BJ (cell line): ENCODE measurements at regions of chr14 and their contacts with region 1.

Region 1: GRCh38 chr14:20970983-20971704 is 15.9 kb downstream of the RNASE2 start:
- DNase-seq: no peak
- H3K4me3 ChIP-seq: peak overlapping the region; percentile 44
- H3K27me3 ChIP-seq: peaks cover 2% of the 10 kb centered on the region; the same call in 1 of the 2 replicates
- CTCF ChIP-seq: peak; percentile 100

Region 2: GRCh38 chr14:20454516-20455354 is 516.4 kb before region 1 on chr14 and contains the starts of genes APEX1 and OSGEP:
- CTCF ChIA-PET with region 1: no interaction called
- POLR2A ChIA-PET with region 1: interaction called, 12 read pairs
- DNase-seq: peak; percentile 93
- H3K4me3 ChIP-seq: peak within 1 kb of the TSS; percentile 65
- H3K27me3 ChIP-seq: no peaks in the 10 kb centered on the region
- CTCF ChIP-seq: no peak
- polyA plus RNA-seq, gene APEX1: 219 and 237 TPM in 2 replicates
- polyA plus RNA-seq, gene OSGEP: 21.2 and 28.9 TPM in 2 replicates

Region 3: GRCh38 chr14:20698934-20699333 is 272.2 kb before region 1 on chr14:
- CTCF ChIA-PET with region 1: no interaction called
- POLR2A ChIA-PET with region 1: no interaction called
- DNase-seq: no peak
- H3K4me3 ChIP-seq: no peak overlapping the region
- H3K27me3 ChIP-seq: no peaks in the 10 kb centered on the region
- CTCF ChIP-seq: no peak

Region 4: DNA sequence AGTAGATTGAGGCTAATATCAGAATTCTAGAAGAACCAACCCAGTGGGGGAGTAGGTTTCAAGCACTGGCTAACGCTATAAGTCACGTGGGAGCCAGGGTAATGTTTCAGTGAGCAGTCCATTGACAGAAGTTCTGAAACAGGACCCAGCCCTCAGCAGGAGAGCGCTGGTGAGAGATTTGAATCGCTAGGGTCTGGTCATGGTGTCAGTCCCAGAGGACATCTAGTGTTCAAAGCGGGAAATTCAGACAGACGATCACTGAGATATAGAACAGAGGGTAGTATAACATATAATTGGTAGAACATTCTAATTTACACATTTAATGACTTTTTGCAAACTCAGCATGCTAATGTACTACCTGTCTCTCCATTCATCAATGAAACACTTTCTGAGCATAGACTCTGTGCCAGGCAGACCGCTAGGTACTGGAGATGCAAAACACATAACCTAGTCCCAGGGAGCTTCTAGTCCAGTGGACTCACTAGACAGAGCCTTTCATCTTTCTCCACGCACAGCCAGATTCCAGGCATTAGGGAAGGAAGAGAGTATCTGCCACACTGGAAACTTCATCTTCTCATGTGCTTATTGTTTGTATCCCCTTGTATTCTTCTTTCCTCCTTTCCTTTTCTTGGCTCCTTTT is 115.4 kb before region 1 on chr14:
- CTCF ChIA-PET with region 1: interaction called, 53 read pairs
- POLR2A ChIA-PET with region 1: no interaction called
- DNase-seq: no peak
- H3K4me3 ChIP-seq: no peak overlapping the region
- H3K27me3 ChIP-seq: peaks cover 6% of the 10 kb centered on the region; the same call in 1 of the 2 replicates
- CTCF ChIP-seq: peak; percentile 63

Region 5: GRCh38 chr14:20956376-20956976 is 14.7 kb before region 1 on chr14:
- CTCF ChIA-PET with region 1: interaction called, 38 read pairs
- POLR2A ChIA-PET with region 1: interaction called, 4 read pairs
- DNase-seq: no peak
- H3K4me3 ChIP-seq: no peak overlapping the region
- H3K27me3 ChIP-seq: peaks cover 3% of the 10 kb centered on the region; the same call in 1 of the 2 replicates
- CTCF ChIP-seq: no peak

Region 6: DNA sequence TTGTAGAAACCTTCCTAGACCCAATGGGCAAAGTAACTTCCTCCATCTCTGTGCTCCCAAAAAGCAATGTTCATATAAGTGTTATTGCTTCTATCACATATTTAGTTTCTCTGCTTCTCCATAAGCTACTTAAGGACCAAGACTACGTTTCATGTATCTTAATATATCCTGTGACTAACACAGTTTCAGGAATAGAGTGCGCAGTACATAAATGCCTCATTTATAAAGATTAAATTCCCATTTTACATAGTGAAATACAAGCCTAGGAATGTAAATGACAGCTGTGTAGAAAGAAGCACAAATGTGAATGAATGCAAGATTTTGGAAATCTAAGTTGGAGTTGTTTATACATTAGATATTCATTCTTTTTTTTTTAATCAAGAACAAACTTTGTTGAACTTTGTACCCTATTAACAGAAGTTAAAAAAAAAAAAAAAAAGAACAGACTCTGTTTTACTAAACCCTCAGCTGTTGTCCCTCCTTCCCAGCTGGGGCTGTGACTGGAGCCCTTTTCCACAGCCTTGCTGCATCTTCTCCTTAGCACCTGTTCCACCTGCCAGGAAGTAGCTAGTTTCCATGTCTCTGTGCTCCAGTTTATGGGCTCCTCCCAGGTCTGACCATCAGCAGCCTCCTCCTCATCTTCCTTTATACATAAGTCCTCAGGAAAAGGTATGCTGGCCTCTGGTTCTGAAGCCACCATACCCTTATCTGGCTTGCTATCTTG is 11.7 kb after region 1 on chr14:
- CTCF ChIA-PET with region 1: interaction called, 46 read pairs
- POLR2A ChIA-PET with region 1: no interaction called
- DNase-seq: no peak
- H3K4me3 ChIP-seq: no peak overlapping the region
- H3K27me3 ChIP-seq: no peaks in the 10 kb centered on the region
- CTCF ChIP-seq: no peak

Region 7: GRCh38 chr14:20989572-20990551 is 18.7 kb after region 1 on chr14 and contains the start of gene METTL17:
- CTCF ChIA-PET with region 1: interaction called, 37 read pairs
- POLR2A ChIA-PET with region 1: no interaction called
- DNase-seq: peak; percentile 94
- H3K4me3 ChIP-seq: peak within 1 kb of the TSS; percentile 91
- H3K27me3 ChIP-seq: no peaks in the 10 kb centered on the region
- CTCF ChIP-seq: peak; percentile 48
- polyA plus RNA-seq, gene METTL17: 49.8 and 56.2 TPM in 2 replicates

Region 8: DNA sequence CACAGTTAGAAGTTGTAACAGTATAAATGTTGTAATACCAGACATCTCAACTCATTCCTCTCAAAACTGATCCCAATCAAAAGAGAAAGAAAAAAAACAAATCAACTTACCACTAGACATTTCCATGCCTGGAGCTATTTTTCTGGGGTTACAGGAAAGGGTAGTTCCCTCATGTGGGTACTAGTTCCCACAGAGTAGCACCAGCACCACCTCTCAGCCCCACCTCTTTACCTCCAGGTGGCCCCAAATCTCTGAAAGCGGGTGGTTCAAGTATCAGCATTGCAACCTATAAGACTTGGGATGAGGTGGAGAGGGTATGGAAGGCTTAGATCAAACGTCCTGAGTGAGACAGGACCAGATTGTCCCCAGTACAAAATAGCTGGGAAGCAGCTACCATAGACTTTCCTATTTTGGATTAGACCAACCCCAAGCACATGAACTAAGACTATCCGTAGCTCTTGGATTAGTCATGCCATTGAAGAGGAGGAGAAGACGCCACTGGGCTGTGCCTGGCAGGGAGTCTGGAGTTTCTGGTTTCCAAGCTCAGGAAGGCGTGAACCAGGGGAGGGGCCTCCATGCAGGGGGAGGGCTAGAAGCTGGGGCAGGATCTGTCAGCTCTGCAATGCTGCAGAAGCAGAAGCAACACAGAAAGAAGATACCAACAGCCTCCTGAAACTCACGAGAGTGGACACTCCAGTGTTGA is 27.7 kb after region 1 on chr14 and contains the start of gene SLC39A2:
- CTCF ChIA-PET with region 1: interaction called, 27 read pairs
- POLR2A ChIA-PET with region 1: no interaction called
- DNase-seq: peak; percentile 37
- H3K4me3 ChIP-seq: no peak within 1 kb of the TSS
- H3K27me3 ChIP-seq: no peaks in the 10 kb centered on the region
- CTCF ChIP-seq: no peak
- polyA plus RNA-seq, gene SLC39A2: not detected in 2 replicates

Region 9: GRCh38 chr14:21149641-21150367 is 178.7 kb after region 1 on chr14:
- CTCF ChIA-PET with region 1: no interaction called
- POLR2A ChIA-PET with region 1: no interaction called
- DNase-seq: no peak
- H3K4me3 ChIP-seq: no peak overlapping the region
- H3K27me3 ChIP-seq: peaks cover 2% of the 10 kb centered on the region; the same call in 1 of the 2 replicates
- CTCF ChIP-seq: no peak